ENCODE measurements at regions of chr1 and their contacts with region 1.

Region 1: GRCh38 chr1:212621951-212622305 is 13.4 kb downstream of the ATF3 start:
- DNase-seq: no peak
- ATAC-seq: peak in 1 of 4 donors; percentile 29
- H3K4me3 ChIP-seq: no peak overlapping the region
- H3K27ac ChIP-seq: no peak overlapping the region
- H3K4me1 ChIP-seq: no peaks in the 10 kb centered on the region
- H3K27me3 ChIP-seq: no peaks in the 10 kb centered on the region
- CTCF ChIP-seq: no peak
- POLR2A ChIP-seq: no peak

Region 2: GRCh38 chr1:212477014-212477679 is 144.8 kb before region 1 on chr1:
- intact Hi-C with region 1: loop called in 1 of 2 experiments (anchors 10 kb)
- DNase-seq: peak; percentile 74 to 85 (median 80)
- ATAC-seq: peak; percentile 99 to 100 (median 100)
- H3K4me3 ChIP-seq: no peak overlapping the region
- H3K27ac ChIP-seq: no peak overlapping the region
- H3K4me1 ChIP-seq: no peaks in the 10 kb centered on the region
- H3K27me3 ChIP-seq: no peaks in the 10 kb centered on the region
- CTCF ChIP-seq: peak; percentile 84 to 96 (median 94)
- POLR2A ChIP-seq: no peak

Region 3: DNA sequence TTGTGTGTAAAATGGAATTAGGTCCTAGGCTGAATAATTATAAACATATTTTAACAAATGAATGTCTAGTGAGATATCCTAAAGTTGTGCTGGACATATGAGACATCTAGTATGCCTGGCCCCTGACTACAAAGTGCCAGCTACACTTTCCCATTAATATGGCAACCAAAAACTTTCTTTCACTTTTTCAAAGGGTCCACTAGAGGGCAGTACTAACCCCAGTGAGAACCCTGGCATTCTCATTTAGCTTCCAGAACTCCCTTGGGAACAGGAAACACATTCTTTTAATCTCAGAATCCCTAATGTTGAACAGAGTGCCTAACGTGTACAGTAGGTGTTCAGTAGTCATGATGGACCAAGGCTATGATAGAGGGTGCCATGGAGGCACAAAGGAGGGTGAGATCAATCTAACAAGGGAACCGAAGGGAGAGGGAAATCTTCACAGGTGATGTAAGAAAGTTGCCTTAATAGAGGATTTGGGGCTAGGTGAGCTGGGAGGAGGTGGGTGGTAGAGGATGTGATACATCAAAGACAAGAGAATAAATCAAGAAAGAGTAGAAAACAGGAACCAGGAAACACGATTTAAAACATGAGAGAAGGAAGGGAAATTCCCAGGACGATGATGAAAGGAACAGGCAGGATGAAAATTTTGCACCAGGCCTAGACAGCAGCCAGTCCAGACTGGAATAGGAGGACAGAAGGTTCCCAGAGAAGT is 128.1 kb after region 1 on chr1:
- intact Hi-C with region 1: no loop called
- DNase-seq: no peak
- ATAC-seq: peak; percentile 81 to 84 (median 84)
- H3K4me3 ChIP-seq: no peak overlapping the region
- H3K27ac ChIP-seq: no peak overlapping the region
- H3K4me1 ChIP-seq: peaks cover 0 to 18% (median 0%) of the 10 kb centered on the region in 4 donors
- H3K27me3 ChIP-seq: no peaks in the 10 kb centered on the region
- CTCF ChIP-seq: peak; percentile 67 to 83 (median 76)
- POLR2A ChIP-seq: no peak